ENCODE measurements at regions of chr3 and their contacts with region 1.

Region 1: GRCh38 chr3:99645277-99646106 is 7.1 kb downstream of the COL8A1 start:
- DNase-seq: no peak
- H3K4me3 Mint-ChIP-seq: no peak overlapping the region
- H3K27ac Mint-ChIP-seq: no peak overlapping the region
- H3K4me1 Mint-ChIP-seq: no peaks in the 10 kb centered on the region
- H3K27me3 Mint-ChIP-seq: peaks cover 7% of the 10 kb centered on the region

Region 2: GRCh38 chr3:99753268-99753975 is 107.9 kb after region 1 on chr3:
- intact Hi-C with region 1: loop called (anchors 2 kb)
- DNase-seq: no peak
- H3K4me3 Mint-ChIP-seq: no peak overlapping the region
- H3K27ac Mint-ChIP-seq: no peak overlapping the region
- H3K4me1 Mint-ChIP-seq: no peaks in the 10 kb centered on the region
- H3K27me3 Mint-ChIP-seq: peaks cover 25% of the 10 kb centered on the region

Measured in activated T-helper 1 cell treated with anti-CD3 and anti-CD28 coated beads, Interleukin-12 subunit alpha, Interleukin-12 subunit beta, Interleukin-2, Interleukin-4 antibody, amounts not matched to agents 30 ng/mL and 10 ng/mL and 1 ng/mL, durations not matched to agents 14 hours and 24 hours and 36 hours (primary cell).